Activated naive CD4-positive, alpha-beta T cell treated with anti-CD3 and anti-CD28 coated beads for 36 hours (primary cell): ENCODE measurements at regions of chr4 and their contacts with region 1.

Region 1: DNA sequence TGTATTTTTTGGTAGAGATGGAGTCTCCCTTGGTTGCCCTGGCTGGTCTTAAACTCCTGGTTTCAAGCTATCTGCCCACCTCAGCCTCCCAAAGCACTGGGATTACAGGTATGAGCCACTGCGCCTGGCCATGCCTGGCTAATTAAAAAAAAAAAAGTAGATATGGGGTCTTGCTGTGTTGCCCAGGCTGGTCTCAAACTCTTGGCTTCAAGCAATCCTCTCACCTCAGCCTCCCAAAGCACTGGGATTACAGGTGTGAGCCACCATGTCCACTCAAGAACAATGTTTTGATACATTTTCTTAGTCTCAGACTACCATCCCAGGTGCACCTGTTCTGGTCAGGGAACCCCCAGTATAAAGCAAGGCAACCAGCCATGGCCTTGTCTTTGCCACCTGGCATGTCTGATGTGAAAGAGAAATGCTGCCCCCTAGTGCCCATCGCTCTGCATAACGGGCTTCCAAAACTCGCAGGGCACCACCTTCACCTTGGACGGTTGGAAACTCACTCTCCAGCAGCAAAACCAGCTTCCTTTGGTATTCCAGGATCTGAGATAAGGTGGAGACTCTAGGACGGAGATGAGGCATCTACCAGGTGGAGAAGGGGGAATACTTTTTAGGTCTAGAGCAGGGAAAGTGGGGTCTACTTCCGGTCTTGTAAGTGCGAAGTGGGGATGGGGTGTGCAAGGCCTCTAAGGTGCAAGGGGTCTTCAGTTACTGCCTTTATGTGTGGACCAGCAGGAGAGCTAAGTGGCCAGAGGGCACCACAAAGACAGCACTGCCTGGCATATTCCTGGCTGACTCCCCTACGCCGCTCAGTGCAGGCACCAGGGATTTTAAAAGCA is 47.7 kb upstream of the AFAP1 start:
- DNase-seq: peak; percentile 90
- H3K4me3 Mint-ChIP-seq: no peak overlapping the region
- H3K27ac Mint-ChIP-seq: no peak overlapping the region
- H3K4me1 Mint-ChIP-seq: peaks cover 7% of the 10 kb centered on the region
- H3K27me3 Mint-ChIP-seq: peaks cover 5% of the 10 kb centered on the region

Region 2: DNA sequence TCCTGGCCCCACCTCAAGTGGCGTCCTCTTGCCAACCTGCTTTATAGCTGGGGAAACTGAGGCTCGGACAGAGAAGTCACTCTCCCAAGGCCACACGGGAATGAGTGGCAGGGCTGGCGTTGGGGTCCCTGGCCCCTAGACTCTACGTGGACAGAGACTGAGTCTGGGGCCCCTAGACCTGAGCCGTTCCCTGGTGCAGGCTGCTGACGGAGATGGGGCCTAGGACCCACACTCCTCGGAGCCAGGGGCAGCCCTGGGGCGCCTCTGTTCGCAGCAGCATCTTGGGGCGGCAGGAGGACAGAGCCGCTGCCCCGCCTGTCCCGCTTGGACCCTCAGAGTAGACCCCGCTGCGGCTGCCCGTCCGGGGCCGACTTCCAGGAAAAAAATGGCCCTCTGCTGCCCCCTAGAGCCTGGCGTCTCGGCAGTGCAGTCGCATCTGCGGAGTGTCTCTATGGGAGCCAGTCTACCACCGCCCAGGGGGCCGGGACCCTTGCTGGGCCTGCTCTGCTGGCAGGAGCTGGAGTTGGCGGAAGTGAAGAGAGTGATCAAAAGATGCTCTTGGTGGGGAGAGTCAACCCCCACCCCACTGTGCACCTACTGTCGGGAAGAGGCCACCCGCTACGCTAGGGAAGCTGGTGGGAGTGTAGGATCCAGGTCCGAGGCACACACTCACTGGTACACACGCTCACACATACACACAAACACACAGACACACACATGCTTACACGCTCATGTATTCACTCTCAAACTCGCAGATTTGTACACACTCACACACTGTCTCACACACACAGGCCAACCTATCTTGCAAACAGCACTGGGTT is 267.8 kb before region 1 on chr4:
- CTCF ChIA-PET with region 1: no interaction called
- intact Hi-C with region 1: loop called (anchors 1 kb)
- DNase-seq: peak; percentile 77
- H3K4me3 Mint-ChIP-seq: no peak overlapping the region
- H3K27ac Mint-ChIP-seq: no peak overlapping the region
- H3K4me1 Mint-ChIP-seq: peaks cover 4% of the 10 kb centered on the region
- H3K27me3 Mint-ChIP-seq: no peaks in the 10 kb centered on the region

Region 3: GRCh38 chr4:7843831-7844593 is 143.4 kb before region 1 on chr4:
- CTCF ChIA-PET with region 1: interaction called, 26 read pairs
- intact Hi-C with region 1: loop called (anchors 1 kb)
- DNase-seq: peak; percentile 77
- H3K4me3 Mint-ChIP-seq: no peak overlapping the region
- H3K27ac Mint-ChIP-seq: peak overlapping the region; percentile 20
- H3K4me1 Mint-ChIP-seq: peaks cover 26% of the 10 kb centered on the region
- H3K27me3 Mint-ChIP-seq: no peaks in the 10 kb centered on the region

Region 4: DNA sequence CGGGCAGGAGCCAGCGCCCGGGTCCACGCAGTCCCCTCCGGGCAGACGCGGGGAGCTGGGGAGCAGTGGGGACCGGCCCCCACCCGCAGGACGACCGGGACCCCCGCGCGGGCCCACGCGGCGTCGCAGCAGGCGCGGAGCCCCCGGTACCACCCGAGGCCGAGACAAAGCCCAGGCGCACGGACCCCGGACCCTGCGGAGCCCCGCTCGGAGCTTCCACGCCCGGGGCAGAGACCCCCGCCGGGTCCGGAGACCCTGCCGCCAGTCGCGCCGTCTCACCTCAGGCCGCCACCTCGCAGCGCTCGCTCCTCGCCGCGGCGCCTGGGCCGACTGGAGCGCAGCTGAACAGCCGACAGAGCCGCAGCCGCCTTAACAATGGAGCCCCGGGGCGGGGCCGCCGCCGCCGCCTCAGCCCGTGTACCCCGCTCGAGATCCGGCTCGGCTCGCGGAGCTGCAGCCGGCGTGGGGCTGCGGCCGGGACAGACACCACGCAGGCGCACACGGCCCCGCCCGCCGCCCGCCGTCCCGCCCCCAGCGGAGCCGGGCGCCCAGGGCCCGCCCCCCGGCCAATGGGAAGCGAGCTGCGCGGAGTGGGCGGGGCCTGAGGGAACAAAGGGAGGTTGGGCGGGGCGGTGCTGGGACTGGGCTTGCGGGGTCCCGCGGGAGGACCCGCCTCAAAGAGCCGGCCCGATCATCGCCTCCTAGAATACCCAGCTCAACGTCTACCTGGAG is 47.8 kb before region 1 on chr4 and contains the start of gene AFAP1:
- CTCF ChIA-PET with region 1: interaction called, 22 read pairs
- intact Hi-C with region 1: loop called (anchors 2 kb)
- DNase-seq: peak; percentile 86
- H3K4me3 Mint-ChIP-seq: peak within 1 kb of the TSS; percentile 69
- H3K27ac Mint-ChIP-seq: no peak within 1 kb of the TSS
- H3K4me1 Mint-ChIP-seq: peaks cover 33% of the 10 kb centered on the region
- H3K27me3 Mint-ChIP-seq: no peaks in the 10 kb centered on the region
- total RNA-seq, gene AFAP1: 26.7 to 28.8 TPM

Region 5: GRCh38 chr4:7967501-7968261 is 19.7 kb before region 1 on chr4:
- CTCF ChIA-PET with region 1: interaction called, 16 read pairs
- intact Hi-C with region 1: loop called (anchors 1 kb)
- DNase-seq: no peak
- H3K4me3 Mint-ChIP-seq: no peak overlapping the region
- H3K27ac Mint-ChIP-seq: peak overlapping the region; percentile 74
- H3K4me1 Mint-ChIP-seq: peaks cover 62% of the 10 kb centered on the region
- H3K27me3 Mint-ChIP-seq: no peaks in the 10 kb centered on the region

Region 6: DNA sequence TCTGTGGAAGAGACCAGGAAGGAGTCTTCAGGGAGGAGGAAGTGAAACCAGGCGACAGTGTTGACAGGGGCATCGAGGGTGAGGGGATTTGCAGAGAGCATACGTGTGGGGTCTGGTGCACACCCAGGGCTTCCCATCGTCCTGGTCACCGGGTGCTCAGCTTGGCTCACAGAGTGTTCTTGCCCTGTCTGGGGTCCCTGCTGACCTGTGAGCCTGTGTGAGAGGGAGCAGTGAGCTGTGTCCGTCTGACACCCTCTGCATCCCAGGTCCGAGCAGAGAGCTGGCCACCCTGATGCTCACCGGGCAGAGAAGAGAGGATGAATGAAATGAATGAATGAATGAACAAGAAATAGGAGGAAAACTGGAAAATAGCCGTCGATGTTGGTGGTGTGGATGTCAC is 651.7 kb after region 1 on chr4:
- CTCF ChIA-PET with region 1: no interaction called
- intact Hi-C with region 1: no loop called
- DNase-seq: no peak
- H3K4me3 Mint-ChIP-seq: no peak overlapping the region
- H3K27ac Mint-ChIP-seq: no peak overlapping the region
- H3K4me1 Mint-ChIP-seq: no peaks in the 10 kb centered on the region
- H3K27me3 Mint-ChIP-seq: no peaks in the 10 kb centered on the region